Transverse colon (tissue), 4 donors: ENCODE measurements at regions of chr4 and their contacts with region 1.

Region 1: GRCh38 chr4:46793036-46793435 is 116.0 kb downstream of the COX7B2 start:
- DNase-seq: no peak
- H3K4me3 ChIP-seq: no peak overlapping the region
- H3K27ac ChIP-seq: no peak overlapping the region
- H3K4me1 ChIP-seq: no peaks in the 10 kb centered on the region
- H3K27me3 ChIP-seq: no peaks in the 10 kb centered on the region
- CTCF ChIP-seq: no peak
- EP300 ChIP-seq: no peak
- POLR2A ChIP-seq: no peak

Region 2: GRCh38 chr4:46765465-46765864 is 27.6 kb before region 1 on chr4:
- in situ Hi-C with region 1: no loop called
- intact Hi-C with region 1: no loop called
- DNase-seq: no peak
- H3K4me3 ChIP-seq: no peak overlapping the region
- H3K27ac ChIP-seq: no peak overlapping the region
- H3K4me1 ChIP-seq: no peaks in the 10 kb centered on the region
- H3K27me3 ChIP-seq: no peaks in the 10 kb centered on the region
- CTCF ChIP-seq: no peak
- EP300 ChIP-seq: no peak
- POLR2A ChIP-seq: no peak

Region 3: DNA sequence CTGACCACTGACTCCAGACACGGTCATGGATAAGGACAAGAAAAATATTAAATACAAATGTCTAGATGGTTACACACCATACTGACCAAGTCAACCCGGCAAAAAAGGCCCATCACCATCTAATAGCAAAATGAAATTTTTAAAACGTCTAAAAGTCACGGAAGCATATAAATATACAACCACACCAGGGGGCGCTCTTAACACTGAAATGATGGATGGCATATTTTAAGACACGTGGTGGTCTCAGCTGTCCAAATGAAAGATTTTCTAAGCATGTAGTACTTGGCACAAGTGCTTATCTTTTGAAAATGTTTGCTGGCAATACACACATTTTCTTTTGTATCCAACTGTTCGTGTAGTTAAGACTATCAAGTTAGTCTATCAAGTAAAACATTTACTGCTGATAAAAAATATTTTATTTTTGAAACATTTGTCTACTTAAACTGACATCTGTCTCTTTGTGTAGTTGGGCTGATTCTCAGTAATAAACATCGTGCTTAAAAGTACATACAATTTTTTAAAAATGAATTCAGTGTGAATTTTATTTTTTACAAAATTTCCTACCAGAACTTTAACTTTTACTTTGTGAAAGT is 51.4 kb after region 1 on chr4:
- in situ Hi-C with region 1: no loop called
- intact Hi-C with region 1: loop called (anchors 2 kb)
- DNase-seq: peak; percentile 12
- H3K4me3 ChIP-seq: no peak overlapping the region
- H3K27ac ChIP-seq: no peak overlapping the region
- H3K4me1 ChIP-seq: no peaks in the 10 kb centered on the region
- H3K27me3 ChIP-seq: no peaks in the 10 kb centered on the region
- CTCF ChIP-seq: peak; percentile 54 to 63 (median 59)
- EP300 ChIP-seq: no peak
- POLR2A ChIP-seq: no peak